K562 (cell line): ENCODE measurements at regions of chr16 and their contacts with region 1.

Region 1: DNA sequence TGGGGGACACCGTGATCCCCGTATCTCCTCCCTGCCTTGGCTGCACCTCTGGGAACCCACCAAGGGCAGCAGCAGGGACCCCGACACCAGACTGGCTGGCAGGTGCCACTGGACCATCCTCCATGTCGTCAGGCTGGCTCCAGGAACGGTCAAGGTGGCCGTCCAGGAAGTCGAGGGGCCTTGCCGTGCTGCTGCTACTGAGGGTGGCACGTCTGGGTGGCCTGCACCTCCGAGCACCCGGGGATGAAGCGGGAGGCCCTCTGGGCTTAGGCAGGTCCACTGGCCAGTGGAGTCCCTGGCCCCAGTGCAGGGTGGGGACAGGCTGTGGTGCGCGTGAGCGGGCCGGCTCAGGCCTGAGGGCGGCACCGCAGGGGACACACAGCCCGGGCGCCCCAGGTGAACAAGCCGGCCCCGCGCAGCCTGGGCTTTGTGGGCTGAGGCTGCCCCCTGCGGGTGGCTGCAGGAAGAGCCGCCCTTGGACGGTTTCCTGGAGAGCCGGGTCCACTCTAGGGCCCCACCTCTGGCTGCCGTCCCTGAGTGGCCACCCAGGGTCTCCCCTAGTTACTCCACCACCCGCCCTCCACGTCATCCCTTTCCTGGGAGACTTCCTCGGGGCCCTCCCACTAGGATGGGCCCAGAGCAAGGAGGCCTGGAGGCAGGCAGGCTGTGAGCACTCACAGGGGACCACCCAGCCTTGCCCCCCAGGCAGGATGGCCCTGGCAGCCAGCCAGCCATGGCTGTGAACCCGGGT is 42.8 kb upstream of the ZC3H18 start:
- DNase-seq: peak; percentile 88 to 93 (median 90)
- ATAC-seq: peak; percentile 88
- H3K4me3 ChIP-seq: no peak overlapping the region
- H3K27ac ChIP-seq: no peak overlapping the region
- H3K4me1 ChIP-seq: peaks cover 40 to 100% of the 10 kb centered on the region in 2 experiments
- H3K27me3 ChIP-seq: no peaks in the 10 kb centered on the region
- CTCF ChIP-seq: peak; percentile 92 to 97 (median 96)
- EP300 ChIP-seq: no peak
- POLR2A ChIP-seq: no peak
- RAD21 ChIP-seq: peak; percentile 96 to 98

Region 2: DNA sequence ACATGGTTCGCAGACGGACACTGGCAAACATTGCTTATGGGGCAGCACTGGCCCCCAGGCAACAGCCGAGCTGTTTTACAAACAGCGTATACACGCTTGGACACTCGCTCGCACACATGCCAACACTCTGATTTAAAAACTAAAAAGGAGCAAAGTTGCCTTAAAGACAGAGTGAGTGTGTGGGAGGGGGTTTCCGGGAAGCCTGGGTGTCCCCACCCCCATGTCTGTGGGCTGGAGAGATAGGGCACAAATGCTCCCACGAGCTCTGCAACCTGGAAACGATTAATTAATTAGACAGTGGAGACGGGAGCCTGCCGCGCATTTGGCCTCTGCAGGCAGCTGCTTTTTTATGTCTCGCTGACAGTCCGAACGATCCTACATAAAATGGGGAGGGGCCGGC is 252.5 kb before region 1 on chr16:
- CTCF ChIA-PET with region 1: no interaction called
- POLR2A ChIA-PET with region 1: no interaction called
- in situ Hi-C with region 1: no loop called
- intact Hi-C with region 1: no loop called
- DNase-seq: no peak
- ATAC-seq: no peak
- H3K4me3 ChIP-seq: no peak overlapping the region
- H3K27ac ChIP-seq: no peak overlapping the region
- H3K4me1 ChIP-seq: no peaks in the 10 kb centered on the region
- H3K27me3 ChIP-seq: peaks cover 0 to 11% of the 10 kb centered on the region in 2 experiments; a peak in 2 of 5 replicates
- CTCF ChIP-seq: no peak
- EP300 ChIP-seq: no peak
- POLR2A ChIP-seq: no peak
- RAD21 ChIP-seq: no peak

Region 3: DNA sequence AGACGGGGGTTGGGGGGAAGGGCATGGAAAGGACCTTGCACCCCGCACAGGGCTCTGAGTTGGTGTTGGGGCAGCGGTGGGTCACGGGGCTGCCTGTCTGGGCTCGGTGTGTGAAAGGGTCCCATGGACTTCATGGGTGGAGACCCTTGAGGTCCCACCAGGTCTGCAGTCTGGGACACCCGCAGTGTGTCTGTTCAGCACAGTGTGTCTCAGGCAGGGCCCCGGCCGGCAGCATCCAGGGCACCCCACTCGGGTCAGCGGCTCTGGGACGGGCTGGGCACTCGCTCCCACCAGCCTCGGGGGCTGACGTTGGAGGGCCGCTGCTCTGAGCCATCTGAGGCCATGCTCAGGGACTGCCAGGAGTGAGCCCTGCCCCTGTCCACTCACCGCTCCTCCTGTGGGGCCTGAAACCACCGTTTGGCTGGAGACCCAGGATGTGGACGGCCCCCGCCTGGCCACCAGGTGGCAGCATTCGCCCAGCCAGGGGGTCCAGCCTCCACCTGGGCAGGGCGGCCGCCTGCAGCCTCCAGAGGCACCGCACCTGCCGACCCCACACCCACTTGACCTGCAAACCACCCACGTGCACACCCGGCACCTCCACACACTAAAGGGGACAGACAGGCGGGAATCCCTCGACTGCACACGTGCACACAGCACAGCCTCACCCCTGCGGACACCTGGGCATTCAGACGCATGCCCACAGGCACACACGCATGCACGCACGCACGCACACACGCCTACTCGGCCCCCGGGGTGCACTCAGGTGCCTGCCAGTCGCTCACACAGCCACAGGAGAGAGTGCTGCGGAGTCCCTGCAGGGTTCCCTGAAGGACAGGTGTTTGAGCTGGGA is 84.4 kb before region 1 on chr16:
- CTCF ChIA-PET with region 1: interaction called, 108 read pairs
- POLR2A ChIA-PET with region 1: interaction called, 3 read pairs
- in situ Hi-C with region 1: loop called (anchors 10 kb)
- intact Hi-C with region 1: loop called (anchors 1 kb)
- DNase-seq: peak; percentile 85 to 93 (median 91)
- ATAC-seq: peak; percentile 98
- H3K4me3 ChIP-seq: no peak overlapping the region
- H3K27ac ChIP-seq: no peak overlapping the region
- H3K4me1 ChIP-seq: peaks cover 3 to 86% of the 10 kb centered on the region in 2 experiments; a peak in 4 of 5 replicates
- H3K27me3 ChIP-seq: peaks cover 0 to 19% of the 10 kb centered on the region in 2 experiments; a peak in 2 of 5 replicates
- CTCF ChIP-seq: peak; percentile 91 to 97 (median 95)
- EP300 ChIP-seq: no peak
- POLR2A ChIP-seq: no peak
- RAD21 ChIP-seq: peak; percentile 99 to 100

Region 4: DNA sequence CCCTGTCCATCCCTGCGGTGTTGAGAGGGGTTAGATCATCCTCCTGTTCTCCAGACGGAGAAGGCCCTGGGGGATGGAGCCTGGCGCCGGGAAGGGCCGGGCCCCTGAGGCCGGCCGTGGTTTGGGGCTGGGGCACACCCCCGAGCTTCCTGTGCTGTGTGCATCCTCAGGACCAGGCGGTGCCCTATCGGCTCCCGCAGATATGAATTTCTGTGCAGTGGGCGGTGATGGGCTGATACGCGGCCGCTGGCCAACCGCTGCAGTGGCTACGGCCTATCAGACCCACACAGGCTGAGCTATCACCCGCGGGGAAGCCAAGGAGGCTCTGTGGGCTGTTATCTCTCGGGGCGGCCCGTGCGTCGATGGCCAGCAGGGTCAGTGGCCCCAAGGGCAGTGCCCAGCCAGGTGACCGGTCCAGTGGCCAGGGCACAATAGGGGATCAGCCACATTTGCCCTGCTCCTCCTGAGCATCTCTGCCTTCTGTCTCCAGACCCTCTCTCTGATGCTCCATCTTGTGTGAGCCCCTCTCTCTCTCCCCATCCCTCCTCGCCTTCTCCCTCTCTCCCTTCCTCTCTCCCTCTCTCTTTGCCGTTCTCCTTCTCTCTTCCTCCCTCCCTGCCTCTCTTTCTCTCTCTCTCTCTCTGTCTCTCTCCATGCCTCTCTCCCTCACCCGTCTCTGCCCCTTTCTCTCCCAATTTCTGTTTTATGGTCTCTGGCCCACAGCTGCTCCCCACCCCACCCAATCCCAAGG is 35.6 kb before region 1 on chr16:
- CTCF ChIA-PET with region 1: no interaction called
- POLR2A ChIA-PET with region 1: interaction called, 4 read pairs
- in situ Hi-C with region 1: no loop called
- intact Hi-C with region 1: loop called (anchors 2 kb)
- DNase-seq: peak; percentile 86 to 97 (median 88)
- ATAC-seq: peak; percentile 78
- H3K4me3 ChIP-seq: no peak overlapping the region
- H3K27ac ChIP-seq: peak overlapping the region; percentile 76; the same call in 2 of the 3 replicates
- H3K4me1 ChIP-seq: peaks cover 63 to 100% of the 10 kb centered on the region in 2 experiments
- H3K27me3 ChIP-seq: no peaks in the 10 kb centered on the region
- CTCF ChIP-seq: no peak
- EP300 ChIP-seq: peak; percentile 98
- POLR2A ChIP-seq: no peak; the same call in 1 of the 2 replicates
- RAD21 ChIP-seq: no peak

Region 5: GRCh38 chr16:88561485-88562369 is 34.4 kb after region 1 on chr16:
- CTCF ChIA-PET with region 1: interaction called, 3 read pairs
- POLR2A ChIA-PET with region 1: no interaction called
- in situ Hi-C with region 1: no loop called
- intact Hi-C with region 1: loop called (anchors 5 kb)
- DNase-seq: peak; percentile 74 to 85 (median 78)
- ATAC-seq: peak; percentile 73
- H3K4me3 ChIP-seq: no peak overlapping the region
- H3K27ac ChIP-seq: no peak overlapping the region
- H3K4me1 ChIP-seq: peaks cover 15 to 37% of the 10 kb centered on the region in 2 experiments; a peak in 4 of 5 replicates
- H3K27me3 ChIP-seq: peaks cover 6 to 17% of the 10 kb centered on the region in 2 experiments; a peak in 2 of 5 replicates
- CTCF ChIP-seq: peak; percentile 77 to 89 (median 83)
- EP300 ChIP-seq: no peak
- POLR2A ChIP-seq: no peak
- RAD21 ChIP-seq: peak; percentile 71 to 86